Vagina (tissue), 2 donors: ENCODE measurements at regions of chr11 and their contacts with region 1.

Region 1: DNA sequence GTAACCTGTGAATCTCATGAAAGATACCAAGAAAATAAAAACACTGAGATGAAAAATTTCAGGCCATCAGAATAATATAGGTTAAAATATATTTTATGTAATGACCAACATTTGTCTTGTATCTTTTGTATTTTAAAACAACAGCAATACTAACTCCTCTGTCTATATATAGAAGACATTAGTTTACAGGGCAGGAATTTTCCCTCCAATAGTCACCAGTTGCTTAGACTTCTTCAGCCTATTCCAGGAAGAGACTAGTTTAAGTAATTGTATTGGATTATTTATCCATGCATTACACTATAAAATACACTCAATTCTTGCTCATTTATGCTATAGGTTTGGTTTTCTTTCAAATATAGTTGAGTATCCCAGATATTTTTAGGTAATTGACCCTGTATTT is 24.1 kb downstream of the ANO5 start:
- DNase-seq: no peak
- H3K4me3 ChIP-seq: no peak overlapping the region
- H3K27ac ChIP-seq: no peak overlapping the region
- H3K4me1 ChIP-seq: no peaks in the 10 kb centered on the region
- H3K27me3 ChIP-seq: no peaks in the 10 kb centered on the region
- CTCF ChIP-seq: no peak
- POLR2A ChIP-seq: no peak

Region 2: GRCh38 chr11:20421946-20422345 is 1795.0 kb before region 1 on chr11:
- intact Hi-C with region 1: no loop called
- DNase-seq: no peak
- H3K4me3 ChIP-seq: no peak overlapping the region
- H3K27ac ChIP-seq: no peak overlapping the region
- H3K4me1 ChIP-seq: no peaks in the 10 kb centered on the region
- H3K27me3 ChIP-seq: no peaks in the 10 kb centered on the region
- CTCF ChIP-seq: no peak
- POLR2A ChIP-seq: no peak

Region 3: GRCh38 chr11:23732026-23732425 is 1515.1 kb after region 1 on chr11:
- intact Hi-C with region 1: loop called (anchors 10 kb)
- DNase-seq: no peak
- H3K4me3 ChIP-seq: no peak overlapping the region
- H3K27ac ChIP-seq: no peak overlapping the region
- H3K4me1 ChIP-seq: no peaks in the 10 kb centered on the region
- H3K27me3 ChIP-seq: no peaks in the 10 kb centered on the region
- CTCF ChIP-seq: no peak
- POLR2A ChIP-seq: no peak